AG04450 (cell line): ENCODE measurements at regions of chr4 and their contacts with region 1.

Region 1: GRCh38 chr4:93359586-93359985 is 469.0 kb upstream of the ATOH1 start:
- DNase-seq: no peak
- H3K4me3 ChIP-seq: no peak overlapping the region
- H3K27ac ChIP-seq: no peak overlapping the region
- H3K27me3 ChIP-seq: no peaks in the 10 kb centered on the region
- CTCF ChIP-seq: no peak

Region 2: DNA sequence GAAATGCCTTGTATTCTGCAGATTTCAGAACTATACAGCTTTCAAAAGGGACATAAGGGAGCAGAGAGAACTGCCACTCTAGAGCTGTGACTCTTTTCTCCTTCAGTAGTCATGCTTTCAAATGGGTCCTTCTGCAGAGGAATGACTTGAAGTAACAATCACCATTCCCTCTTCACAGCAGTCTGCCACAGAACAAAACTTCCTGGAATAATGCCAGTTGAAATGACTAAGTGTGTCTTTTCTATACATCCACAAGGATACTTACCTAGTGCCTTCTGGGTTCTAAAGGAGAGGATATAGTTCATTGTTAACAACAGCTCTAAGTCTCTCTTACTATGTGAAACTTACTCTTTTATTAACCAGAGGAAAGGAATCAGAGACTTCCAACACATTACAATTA is 46.4 kb before region 1 on chr4:
- CTCF ChIA-PET with region 1: interaction called, 11 read pairs
- POLR2A ChIA-PET with region 1: no interaction called
- DNase-seq: no peak
- H3K4me3 ChIP-seq: no peak overlapping the region
- H3K27ac ChIP-seq: no peak overlapping the region
- H3K27me3 ChIP-seq: no peaks in the 10 kb centered on the region
- CTCF ChIP-seq: no peak

Region 3: DNA sequence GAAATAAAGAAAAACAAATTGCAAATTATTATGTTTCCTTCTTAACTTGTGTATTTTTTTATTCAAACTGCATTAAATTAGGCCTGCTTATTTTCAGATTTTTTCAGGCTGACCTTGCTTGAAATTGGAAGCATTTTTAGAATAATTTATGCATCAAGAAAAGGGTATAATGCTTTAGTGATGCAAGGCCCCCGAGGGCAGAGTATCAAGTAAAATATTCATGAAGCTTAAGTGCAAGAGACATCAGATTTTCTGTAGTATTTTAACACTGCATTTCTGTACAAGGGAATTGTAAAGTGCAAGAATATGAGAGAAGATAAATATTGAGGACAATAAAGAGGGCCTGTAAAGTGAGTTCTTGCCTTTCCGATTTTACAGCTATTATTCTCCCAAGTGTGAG is 16.8 kb before region 1 on chr4:
- CTCF ChIA-PET with region 1: no interaction called
- POLR2A ChIA-PET with region 1: no interaction called
- DNase-seq: no peak
- H3K4me3 ChIP-seq: no peak overlapping the region
- H3K27ac ChIP-seq: no peak overlapping the region
- H3K27me3 ChIP-seq: no peaks in the 10 kb centered on the region
- CTCF ChIP-seq: no peak

Region 4: GRCh38 chr4:93396272-93396671 is 36.7 kb after region 1 on chr4:
- CTCF ChIA-PET with region 1: no interaction called
- POLR2A ChIA-PET with region 1: no interaction called
- DNase-seq: no peak
- H3K4me3 ChIP-seq: no peak overlapping the region
- H3K27ac ChIP-seq: no peak overlapping the region
- H3K27me3 ChIP-seq: no peaks in the 10 kb centered on the region
- CTCF ChIP-seq: no peak

Region 5: DNA sequence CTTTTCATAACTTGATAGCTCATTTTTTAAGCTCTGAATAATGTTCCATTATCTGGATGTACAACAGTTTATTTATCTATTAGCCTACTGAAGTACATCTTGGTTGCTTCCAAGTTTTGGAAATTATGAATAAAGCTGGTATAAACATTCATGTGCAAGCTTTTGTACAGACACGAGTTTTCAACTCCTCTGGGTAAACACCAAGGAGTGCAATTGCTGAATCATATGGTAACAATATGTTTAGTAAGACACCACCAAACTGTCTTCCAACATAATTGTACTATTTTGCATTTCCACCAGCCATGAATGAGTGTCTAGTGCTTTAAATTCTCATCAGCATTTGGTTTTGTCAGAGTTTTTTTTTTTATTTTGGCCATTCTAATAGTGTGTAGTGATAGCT is 202.3 kb after region 1 on chr4:
- CTCF ChIA-PET with region 1: no interaction called
- POLR2A ChIA-PET with region 1: no interaction called
- DNase-seq: no peak
- H3K4me3 ChIP-seq: no peak overlapping the region
- H3K27ac ChIP-seq: no peak overlapping the region
- H3K27me3 ChIP-seq: no peaks in the 10 kb centered on the region
- CTCF ChIP-seq: no peak

Region 6: GRCh38 chr4:93710101-93710846 is 350.7 kb after region 1 on chr4:
- CTCF ChIA-PET with region 1: no interaction called
- POLR2A ChIA-PET with region 1: no interaction called
- DNase-seq: no peak
- H3K4me3 ChIP-seq: no peak overlapping the region
- H3K27ac ChIP-seq: no peak overlapping the region
- H3K27me3 ChIP-seq: no peaks in the 10 kb centered on the region
- CTCF ChIP-seq: no peak